OCI-LY7 (cell line): ENCODE measurements at regions of chr12 and their contacts with region 1.

Region 1: DNA sequence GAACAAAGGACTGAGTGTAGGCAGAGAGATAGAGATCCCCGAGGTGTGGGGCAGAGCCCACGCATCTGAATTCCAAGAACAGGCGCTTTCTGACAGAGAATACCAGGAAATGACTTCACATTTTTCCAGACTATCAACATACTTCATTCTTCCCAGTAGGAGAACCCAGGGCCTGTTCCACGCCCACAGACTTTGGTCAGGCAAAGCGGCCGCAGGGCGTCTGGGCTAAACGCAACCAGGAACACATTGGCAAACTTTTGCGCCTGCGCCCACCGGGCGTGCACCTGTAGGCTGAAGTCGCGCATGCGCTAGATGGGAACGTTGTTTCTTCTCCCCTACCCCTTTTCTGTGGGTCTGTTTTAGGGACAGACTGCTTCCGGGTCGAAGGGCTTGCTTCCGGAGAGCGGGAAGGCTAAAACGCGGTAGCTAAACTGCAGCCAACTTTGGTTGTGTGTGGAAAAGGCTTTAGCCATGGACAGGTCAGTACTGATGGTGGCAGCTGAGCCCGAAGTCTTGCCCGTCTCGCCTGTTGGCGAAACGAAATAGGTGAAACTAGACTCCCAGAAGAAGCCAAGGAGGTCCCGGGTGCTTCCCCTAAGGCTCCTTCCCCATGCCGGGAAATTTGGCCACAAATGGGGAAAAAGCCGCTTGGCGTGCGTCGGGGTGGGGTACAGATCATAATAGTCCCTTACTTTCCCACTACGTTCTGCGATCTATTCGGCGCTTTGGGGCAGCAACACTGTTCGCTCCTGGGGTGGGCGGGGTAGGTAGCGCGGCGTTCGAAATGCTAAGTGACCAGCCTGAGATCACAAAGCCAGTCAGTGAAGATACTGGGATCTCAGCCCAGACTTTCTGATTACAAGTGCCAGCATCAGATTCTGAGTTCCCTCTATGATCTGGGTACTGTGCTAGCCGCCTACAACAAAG is at the start of gene NUP107:
- DNase-seq: peak; percentile 99
- H3K4me3 ChIP-seq: peak within 1 kb of the TSS; percentile 98
- H3K27ac ChIP-seq: peak within 1 kb of the TSS; percentile 34
- H3K4me1 ChIP-seq: peaks cover 21% of the 10 kb centered on the region
- CTCF ChIP-seq: no peak
- total RNA-seq, gene NUP107: 106 and 113 TPM in 2 replicates

Region 2: GRCh38 chr12:67943226-67943892 is 743.5 kb before region 1 on chr12:
- CTCF ChIA-PET with region 1: no interaction called
- POLR2A ChIA-PET with region 1: no interaction called
- intact Hi-C with region 1: no loop called
- DNase-seq: peak; percentile 83
- H3K4me3 ChIP-seq: no peak overlapping the region
- H3K27ac ChIP-seq: no peak overlapping the region
- H3K4me1 ChIP-seq: peaks cover 5% of the 10 kb centered on the region
- CTCF ChIP-seq: peak; percentile 95

Region 3: GRCh38 chr12:68331869-68332727 is 354.8 kb before region 1 on chr12 and contains the start of gene MDM1:
- CTCF ChIA-PET with region 1: no interaction called
- POLR2A ChIA-PET with region 1: no interaction called
- intact Hi-C with region 1: loop called (anchors 10 kb)
- DNase-seq: peak; percentile 99
- H3K4me3 ChIP-seq: peak within 1 kb of the TSS; percentile 84
- H3K27ac ChIP-seq: peak within 1 kb of the TSS; percentile 52
- H3K4me1 ChIP-seq: peaks cover 24% of the 10 kb centered on the region
- CTCF ChIP-seq: no peak
- total RNA-seq, gene MDM1: 30.8 and 37.4 TPM in 2 replicates

Region 4: DNA sequence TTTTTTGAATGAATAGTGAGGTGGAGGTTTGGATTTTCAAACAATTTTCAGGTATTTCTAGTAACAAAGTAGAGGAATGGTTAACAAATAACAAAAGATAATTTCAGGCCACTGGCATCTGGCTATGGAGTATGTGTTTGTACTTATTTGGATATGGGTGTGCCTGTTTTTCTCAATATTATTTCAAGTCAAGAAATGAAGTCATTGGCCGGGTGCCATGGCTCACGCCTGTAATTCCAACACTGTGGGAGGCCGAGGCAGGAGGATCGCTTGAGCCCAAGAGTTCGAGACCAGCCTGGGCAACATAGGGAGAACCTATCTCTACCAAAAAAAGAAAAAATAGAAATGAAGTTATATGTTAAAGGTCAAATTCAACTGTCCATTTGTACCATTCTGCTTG is 73.0 kb after region 1 on chr12:
- CTCF ChIA-PET with region 1: no interaction called
- POLR2A ChIA-PET with region 1: no interaction called
- intact Hi-C with region 1: no loop called
- DNase-seq: no peak
- H3K4me3 ChIP-seq: no peak overlapping the region
- H3K27ac ChIP-seq: no peak overlapping the region
- H3K4me1 ChIP-seq: no peaks in the 10 kb centered on the region
- CTCF ChIP-seq: no peak

Region 5: GRCh38 chr12:69083689-69084088 is 396.8 kb after region 1 on chr12:
- CTCF ChIA-PET with region 1: no interaction called
- POLR2A ChIA-PET with region 1: no interaction called
- intact Hi-C with region 1: no loop called
- DNase-seq: no peak
- H3K4me3 ChIP-seq: no peak overlapping the region
- H3K27ac ChIP-seq: no peak overlapping the region
- H3K4me1 ChIP-seq: no peaks in the 10 kb centered on the region
- CTCF ChIP-seq: no peak